ENCODE measurements at regions of chr4 and their contacts with region 1.

Region 1: GRCh38 chr4:141636082-141636770 is at the start of gene IL15:
- DNase-seq: peak; percentile 74
- H3K4me3 ChIP-seq: peak within 1 kb of the TSS; percentile 79 to 90 (median 86)
- H3K27ac ChIP-seq: peak within 1 kb of the TSS; percentile 25
- H3K4me1 ChIP-seq: peaks cover 8% of the 10 kb centered on the region
- H3K27me3 ChIP-seq: no peaks in the 10 kb centered on the region
- CTCF ChIP-seq: no peak
- POLR2A ChIP-seq: no peak
- total RNA-seq, gene IL15: 3.0 and 3.1 TPM in 2 replicates

Region 2: GRCh38 chr4:141571368-141571767 is 64.9 kb before region 1 on chr4:
- CTCF ChIA-PET with region 1: no interaction called
- POLR2A ChIA-PET with region 1: no interaction called
- dilution Hi-C with region 1: no loop called
- intact Hi-C with region 1: loop called (anchors 2 kb)
- DNase-seq: no peak
- H3K4me3 ChIP-seq: no peak overlapping the region
- H3K27ac ChIP-seq: no peak overlapping the region
- H3K4me1 ChIP-seq: peaks cover 5% of the 10 kb centered on the region
- H3K27me3 ChIP-seq: no peaks in the 10 kb centered on the region
- CTCF ChIP-seq: no peak
- POLR2A ChIP-seq: no peak

Region 3: DNA sequence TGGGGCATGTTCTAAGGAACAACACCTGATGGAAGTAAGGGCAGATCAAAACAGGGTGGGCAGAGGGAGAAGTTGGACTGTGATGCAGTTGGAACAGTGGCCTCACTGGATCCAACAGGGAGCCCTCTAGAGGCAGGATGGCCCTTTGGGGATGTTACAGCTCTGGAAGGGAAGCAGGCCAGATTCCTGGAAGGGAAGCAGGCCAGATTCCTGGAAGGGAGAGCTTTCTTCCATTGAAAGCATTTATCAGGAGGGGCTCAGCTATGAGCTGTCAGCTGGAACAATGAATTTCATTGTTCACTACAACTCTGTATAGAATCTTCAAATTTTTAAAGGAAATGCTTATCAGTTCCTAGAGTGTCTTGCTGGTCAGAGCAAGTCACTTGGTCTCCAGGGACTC is 17.9 kb after region 1 on chr4:
- CTCF ChIA-PET with region 1: interaction called, 10 read pairs
- POLR2A ChIA-PET with region 1: no interaction called
- dilution Hi-C with region 1: no loop called
- intact Hi-C with region 1: no loop called
- DNase-seq: peak; percentile 82
- H3K4me3 ChIP-seq: no peak overlapping the region
- H3K27ac ChIP-seq: no peak overlapping the region
- H3K4me1 ChIP-seq: peaks cover 5% of the 10 kb centered on the region
- H3K27me3 ChIP-seq: no peaks in the 10 kb centered on the region
- CTCF ChIP-seq: peak; percentile 36 to 71
- POLR2A ChIP-seq: no peak

Region 4: GRCh38 chr4:141711014-141711610 is 74.9 kb after region 1 on chr4:
- CTCF ChIA-PET with region 1: interaction called, 10 read pairs
- POLR2A ChIA-PET with region 1: no interaction called
- dilution Hi-C with region 1: no loop called
- intact Hi-C with region 1: no loop called
- DNase-seq: peak; percentile 50
- H3K4me3 ChIP-seq: no peak overlapping the region
- H3K27ac ChIP-seq: no peak overlapping the region
- H3K4me1 ChIP-seq: peaks cover 4% of the 10 kb centered on the region
- H3K27me3 ChIP-seq: no peaks in the 10 kb centered on the region
- CTCF ChIP-seq: peak; percentile 40 to 52
- POLR2A ChIP-seq: no peak

Measured in endothelial cell of umbilical vein (primary cell).